ENCODE measurements at regions of chr12 and their contacts with region 1.

Region 1: DNA sequence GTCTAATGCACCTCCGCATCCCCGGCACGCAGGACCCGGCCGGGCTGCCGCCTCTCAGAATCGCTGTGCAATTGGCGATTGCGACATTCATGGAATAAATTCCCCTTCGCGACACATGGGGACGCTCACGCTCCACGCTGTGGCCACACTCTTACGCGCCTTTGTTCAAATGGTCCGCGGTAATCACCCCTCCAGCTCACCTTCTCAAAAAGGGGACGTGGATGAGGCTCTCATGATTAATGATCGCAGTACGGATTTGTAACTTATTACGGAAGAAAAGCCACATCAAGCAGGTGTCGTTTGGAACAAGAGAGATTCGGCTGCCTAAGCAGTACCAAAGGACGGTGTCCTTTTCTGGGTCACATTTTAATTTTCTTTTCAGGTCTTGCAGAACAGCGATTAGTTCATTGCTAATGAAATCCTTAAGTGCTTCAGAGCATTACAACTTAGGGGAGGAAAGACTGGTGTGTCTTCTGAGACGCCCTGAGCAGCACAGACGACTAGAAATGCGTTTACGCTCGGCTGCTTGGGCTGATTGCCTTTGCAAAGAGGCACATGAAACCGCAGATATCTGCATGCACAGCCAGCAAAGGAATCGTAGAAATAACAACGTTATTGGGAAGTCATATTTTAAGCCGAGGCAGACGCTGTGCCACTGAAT is 37.3 kb upstream of the ADGRD1 start:
- DNase-seq: peak; percentile 78
- H3K4me3 ChIP-seq: peak overlapping the region; percentile 25
- H3K27ac ChIP-seq: no peak overlapping the region
- H3K4me1 ChIP-seq: no peaks in the 10 kb centered on the region
- H3K27me3 ChIP-seq: peaks cover 40% of the 10 kb centered on the region
- CTCF ChIP-seq: peak; percentile 93

Region 2: DNA sequence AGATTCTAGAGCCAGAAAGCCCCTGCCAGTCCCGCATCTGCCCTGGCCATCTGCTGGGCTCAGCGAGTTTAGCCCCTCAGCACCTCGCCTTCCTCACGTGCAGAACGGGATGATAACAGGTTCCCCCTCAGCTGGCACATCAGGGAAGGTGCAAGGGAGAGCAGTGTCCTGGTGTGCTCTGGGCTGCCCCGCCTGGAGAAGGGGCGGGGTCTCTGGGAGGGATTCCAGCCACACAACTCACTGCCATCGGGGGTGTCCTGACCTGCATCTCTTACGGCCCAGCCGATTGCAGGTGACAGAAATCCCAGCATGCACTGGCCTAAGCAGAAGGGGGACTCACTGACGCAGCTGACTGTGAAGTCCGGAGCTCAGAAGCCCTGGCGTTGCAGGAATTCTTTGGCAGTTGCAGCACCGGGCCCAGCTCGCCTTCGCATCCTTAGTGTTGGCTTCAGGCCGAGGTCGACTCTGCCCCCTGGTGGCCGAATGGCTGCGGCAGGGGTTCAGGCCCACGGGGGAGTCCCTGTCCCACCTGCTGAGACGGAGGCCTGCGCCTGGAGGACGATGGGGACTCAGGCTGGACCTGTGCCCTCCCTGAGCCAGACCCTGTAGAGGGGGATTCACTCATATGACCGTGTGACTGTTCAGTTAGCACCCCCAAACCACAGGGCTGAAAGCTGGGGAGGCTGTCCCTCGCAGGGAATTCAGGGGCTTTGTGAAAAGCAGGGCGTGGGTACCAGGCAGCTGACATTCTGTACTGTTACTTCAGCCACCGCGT is 215.9 kb after region 1 on chr12:
- CTCF ChIA-PET with region 1: interaction called, 15 read pairs
- POLR2A ChIA-PET with region 1: no interaction called
- intact Hi-C with region 1: loop called (anchors 1 kb)
- DNase-seq: peak; percentile 78
- H3K4me3 ChIP-seq: no peak overlapping the region
- H3K27ac ChIP-seq: no peak overlapping the region
- H3K4me1 ChIP-seq: peaks cover 5% of the 10 kb centered on the region
- H3K27me3 ChIP-seq: no peaks in the 10 kb centered on the region
- CTCF ChIP-seq: peak; percentile 86

Region 3: GRCh38 chr12:131345521-131346436 is 429.4 kb after region 1 on chr12:
- CTCF ChIA-PET with region 1: no interaction called
- POLR2A ChIA-PET with region 1: no interaction called
- intact Hi-C with region 1: no loop called
- DNase-seq: no peak
- H3K4me3 ChIP-seq: no peak overlapping the region
- H3K27ac ChIP-seq: no peak overlapping the region
- H3K4me1 ChIP-seq: no peaks in the 10 kb centered on the region
- H3K27me3 ChIP-seq: no peaks in the 10 kb centered on the region
- CTCF ChIP-seq: no peak

Region 4: DNA sequence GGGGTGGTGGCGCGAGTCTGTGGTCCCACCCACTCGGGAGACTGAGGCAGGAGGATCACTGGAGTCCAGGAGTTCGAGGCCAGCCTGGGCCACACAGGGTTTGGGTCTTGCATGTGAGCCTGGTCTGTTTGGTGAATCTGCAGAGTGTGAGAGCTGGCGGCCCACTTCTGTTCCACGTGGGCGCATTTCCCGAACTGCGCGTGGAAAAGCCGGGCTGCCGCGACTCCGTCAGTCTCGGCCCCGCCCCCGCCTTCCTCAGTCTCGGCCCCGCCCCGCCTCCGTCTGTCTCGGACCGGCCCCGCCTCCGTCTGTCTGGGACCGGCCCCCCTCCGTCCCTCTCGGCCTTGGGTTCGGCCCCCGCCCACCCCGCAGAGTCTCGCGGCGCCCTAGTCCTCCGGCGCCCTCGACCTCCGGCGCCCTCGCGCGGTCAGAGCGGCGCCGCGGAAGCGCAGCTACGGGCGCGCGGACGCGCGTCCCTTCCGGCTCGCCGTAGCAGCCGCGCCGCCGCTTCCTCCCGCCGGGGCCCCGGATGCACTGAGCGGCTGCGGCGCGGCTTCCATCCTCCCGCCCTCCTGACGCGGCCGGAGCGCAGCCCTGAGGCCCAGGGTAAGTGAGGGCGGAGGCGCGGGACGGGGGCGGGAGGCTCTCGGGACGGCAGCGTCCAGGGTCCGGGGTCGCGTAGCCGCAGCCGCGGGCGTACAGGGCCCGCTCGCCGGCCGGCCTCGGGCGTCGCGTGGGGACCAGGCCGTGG is 1033.2 kb after region 1 on chr12 and contains the start of gene EP400:
- CTCF ChIA-PET with region 1: no interaction called
- POLR2A ChIA-PET with region 1: no interaction called
- intact Hi-C with region 1: no loop called
- DNase-seq: peak; percentile 97
- H3K4me3 ChIP-seq: peak within 1 kb of the TSS; percentile 97
- H3K27ac ChIP-seq: peak within 1 kb of the TSS; percentile 92
- H3K4me1 ChIP-seq: peaks cover 4% of the 10 kb centered on the region
- H3K27me3 ChIP-seq: no peaks in the 10 kb centered on the region
- CTCF ChIP-seq: peak; percentile 51
- total RNA-seq, gene EP400: 80.1 and 91.4 TPM in 2 replicates

Region 5: GRCh38 chr12:132003846-132004245 is 1087.5 kb after region 1 on chr12:
- CTCF ChIA-PET with region 1: no interaction called
- POLR2A ChIA-PET with region 1: no interaction called
- intact Hi-C with region 1: loop called (anchors 5 kb)
- DNase-seq: no peak
- H3K4me3 ChIP-seq: no peak overlapping the region
- H3K27ac ChIP-seq: no peak overlapping the region
- H3K4me1 ChIP-seq: no peaks in the 10 kb centered on the region
- H3K27me3 ChIP-seq: no peaks in the 10 kb centered on the region
- CTCF ChIP-seq: no peak

Measured in A673 (cell line).